Mammary epithelial cell (primary cell): ENCODE measurements at regions of chr2 and their contacts with region 1.

Region 1: DNA sequence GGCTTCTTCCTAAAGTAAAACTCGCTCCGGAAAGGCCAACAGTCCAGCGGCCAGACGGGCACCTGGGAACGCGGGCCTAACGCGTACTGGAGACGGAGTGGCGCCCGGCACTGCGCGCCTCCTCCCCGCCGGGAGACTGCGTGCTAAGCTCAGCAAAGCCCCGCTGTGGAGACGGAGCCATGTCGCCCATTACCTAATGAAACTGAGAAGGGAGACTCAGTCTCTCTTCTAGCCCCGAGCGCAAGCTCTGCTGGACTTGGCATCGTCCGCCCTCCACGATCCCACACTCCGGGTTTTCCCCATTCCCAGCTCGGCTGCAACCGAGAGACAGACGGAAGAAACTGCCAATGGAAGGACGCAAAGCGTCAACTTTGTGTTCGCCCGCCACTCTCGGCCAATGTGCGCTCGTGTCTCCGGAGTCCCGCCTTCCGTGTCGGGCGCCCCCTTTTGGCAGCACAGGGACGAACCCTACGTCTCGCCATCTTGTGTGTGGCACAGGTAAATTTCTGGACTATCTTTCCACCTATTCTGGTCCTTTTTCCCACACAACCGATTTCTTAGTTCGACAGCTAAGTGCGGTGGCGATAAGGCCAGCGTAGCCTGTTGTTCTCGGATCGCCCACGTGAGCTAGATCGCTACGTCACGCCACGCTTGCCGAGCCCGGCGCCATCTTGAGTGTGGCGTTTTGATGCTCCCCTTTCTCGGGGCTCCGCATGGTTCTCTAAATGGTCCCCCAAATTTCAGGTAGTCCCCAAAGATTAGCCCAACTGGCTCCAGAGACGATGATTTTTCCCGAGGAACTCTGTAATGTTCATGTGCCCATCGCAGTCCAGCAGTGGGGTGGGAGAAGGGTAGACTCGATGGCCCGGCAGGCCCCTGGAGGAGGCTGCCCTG is 1.3 kb upstream of the PTMA start:
- DNase-seq: peak; percentile 98
- H3K4me3 ChIP-seq: peak overlapping the region; percentile 54 to 76 (median 63)
- H3K27ac ChIP-seq: peak overlapping the region; percentile 94
- H3K4me1 ChIP-seq: peaks cover 25% of the 10 kb centered on the region
- H3K27me3 ChIP-seq: no peaks in the 10 kb centered on the region
- CTCF ChIP-seq: peak; percentile 93 to 95

Region 2: DNA sequence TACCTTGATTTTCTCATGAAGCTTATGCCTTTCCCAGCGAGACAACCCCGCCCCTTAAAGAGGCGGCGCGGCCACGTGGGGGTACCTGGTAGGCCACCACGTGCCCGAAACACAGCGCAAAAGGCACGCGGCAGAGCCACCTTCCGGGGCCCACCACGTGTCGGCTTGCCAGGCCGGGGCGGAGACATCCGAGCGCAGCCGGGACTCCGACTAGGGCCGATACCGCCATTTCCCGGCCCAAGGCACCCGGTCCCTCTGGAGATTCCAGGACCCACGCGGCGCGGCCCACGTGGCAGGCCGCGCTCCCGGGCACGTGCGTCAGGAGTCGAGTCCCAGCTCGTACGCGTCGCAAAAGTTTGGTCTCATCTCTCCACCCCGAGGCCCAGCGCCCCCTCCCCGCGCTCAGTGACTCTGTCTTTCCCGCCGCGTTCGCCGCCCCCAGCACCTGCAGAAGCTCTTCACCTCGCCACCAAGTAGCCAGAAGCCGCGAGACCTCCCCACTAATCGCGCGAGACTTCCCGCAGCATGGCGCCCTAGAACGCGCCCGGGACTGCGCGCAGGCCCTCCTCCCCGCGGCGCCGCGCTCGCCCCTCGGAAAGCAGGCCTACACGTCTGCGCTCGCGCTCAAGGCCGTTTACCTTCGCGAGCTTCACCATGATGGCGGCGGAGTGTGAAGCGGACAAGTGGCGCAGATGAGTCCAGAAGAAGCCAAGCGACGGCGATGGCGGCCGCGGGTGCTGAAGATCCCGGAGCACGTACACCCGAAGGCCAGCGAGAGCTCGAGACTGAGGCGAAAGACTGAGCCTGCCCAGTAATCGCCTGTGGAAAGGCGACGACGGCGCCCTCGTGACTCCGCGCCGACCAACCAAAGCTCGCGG is 243.0 kb before region 1 on chr2 and contains the start of gene NCL:
- CTCF ChIA-PET with region 1: no interaction called
- dilution Hi-C with region 1: no loop called
- in situ Hi-C with region 1: no loop called
- intact Hi-C with region 1: loop called (anchors 5 kb)
- DNase-seq: peak; percentile 98
- H3K4me3 ChIP-seq: peak within 1 kb of the TSS; percentile 95 to 100 (median 96)
- H3K27ac ChIP-seq: peak within 1 kb of the TSS; percentile 92
- H3K4me1 ChIP-seq: peaks cover 19% of the 10 kb centered on the region
- H3K27me3 ChIP-seq: no peaks in the 10 kb centered on the region
- CTCF ChIP-seq: no peak
- total RNA-seq, gene NCL: 98.0 to 671 TPM

Region 3: GRCh38 chr2:231662028-231662810 is 44.8 kb before region 1 on chr2:
- CTCF ChIA-PET with region 1: no interaction called
- dilution Hi-C with region 1: no loop called
- in situ Hi-C with region 1: no loop called
- intact Hi-C with region 1: loop called (anchors 1 kb)
- DNase-seq: peak; percentile 92
- H3K4me3 ChIP-seq: peak overlapping the region in 2 of 3 experiments; percentile 45 to 49
- H3K27ac ChIP-seq: peak overlapping the region; percentile 53
- H3K4me1 ChIP-seq: peaks cover 18% of the 10 kb centered on the region
- H3K27me3 ChIP-seq: no peaks in the 10 kb centered on the region
- CTCF ChIP-seq: no peak

Region 4: GRCh38 chr2:231743376-231744116 is 36.6 kb after region 1 on chr2:
- CTCF ChIA-PET with region 1: no interaction called
- dilution Hi-C with region 1: no loop called
- in situ Hi-C with region 1: no loop called
- intact Hi-C with region 1: no loop called
- DNase-seq: no peak
- H3K4me3 ChIP-seq: no peak overlapping the region
- H3K27ac ChIP-seq: no peak overlapping the region
- H3K4me1 ChIP-seq: no peaks in the 10 kb centered on the region
- H3K27me3 ChIP-seq: no peaks in the 10 kb centered on the region
- CTCF ChIP-seq: no peak

Region 5: GRCh38 chr2:231780909-231781797 is 74.2 kb after region 1 on chr2 and contains the start of gene PDE6D:
- CTCF ChIA-PET with region 1: no interaction called
- dilution Hi-C with region 1: no loop called
- in situ Hi-C with region 1: no loop called
- intact Hi-C with region 1: loop called (anchors 5 kb)
- DNase-seq: peak; percentile 100
- H3K4me3 ChIP-seq: peak within 1 kb of the TSS; percentile 65 to 95 (median 69)
- H3K27ac ChIP-seq: peak within 1 kb of the TSS; percentile 50
- H3K4me1 ChIP-seq: peaks cover 15% of the 10 kb centered on the region
- H3K27me3 ChIP-seq: no peaks in the 10 kb centered on the region
- CTCF ChIP-seq: no peak
- total RNA-seq, gene PDE6D: 15.2 to 16.2 TPM